Ovary (tissue), 10 donors: ENCODE measurements at regions of chr4 and their contacts with region 1.

Region 1: DNA sequence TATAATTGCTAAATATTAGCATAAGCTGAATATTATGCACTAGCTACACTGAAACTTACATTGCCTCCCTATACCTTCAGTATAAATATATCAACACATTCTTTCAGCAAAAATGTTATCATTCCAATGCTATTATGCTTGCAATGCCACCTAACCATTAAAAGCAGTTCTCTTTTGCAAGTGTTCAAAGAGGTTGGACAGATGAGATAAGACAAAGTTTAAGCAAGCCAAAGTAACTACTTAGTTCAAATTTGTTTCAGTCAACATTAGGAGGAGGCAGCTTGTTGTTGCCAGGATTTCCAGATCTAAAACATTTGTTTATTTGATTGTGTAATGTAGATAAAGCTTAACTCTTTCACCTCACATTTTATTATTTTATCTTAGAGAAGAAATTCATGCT is 323.9 kb upstream of the FAM241A start:
- DNase-seq: no peak
- H3K4me3 ChIP-seq: no peak overlapping the region
- H3K27ac ChIP-seq: no peak overlapping the region
- H3K4me1 ChIP-seq: no peaks in the 10 kb centered on the region
- H3K27me3 ChIP-seq: no peaks in the 10 kb centered on the region
- CTCF ChIP-seq: no peak
- EP300 ChIP-seq: no peak
- POLR2A ChIP-seq: no peak

Region 2: DNA sequence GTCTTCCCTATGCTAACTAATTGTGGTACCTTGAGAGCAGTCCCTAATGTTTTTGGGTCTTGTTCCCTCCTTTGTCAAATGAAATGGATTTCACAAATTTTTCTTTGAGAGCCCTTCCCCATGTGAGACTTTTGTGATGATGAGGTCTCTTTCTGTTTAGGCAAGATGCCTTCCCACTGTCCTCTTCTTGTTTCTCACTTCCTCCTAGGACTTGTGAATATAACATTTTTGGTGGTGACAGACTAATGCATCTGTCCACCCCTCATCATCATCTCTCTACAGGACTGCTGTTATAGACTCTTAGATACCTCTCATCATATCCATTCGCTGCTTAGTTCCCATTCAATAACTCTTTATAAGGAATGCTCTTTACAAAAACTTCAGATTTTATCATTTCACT is 1219.5 kb after region 1 on chr4:
- intact Hi-C with region 1: loop called in 1 of 4 experiments (anchors 5 kb)
- DNase-seq: no peak
- H3K4me3 ChIP-seq: no peak overlapping the region
- H3K27ac ChIP-seq: no peak overlapping the region
- H3K4me1 ChIP-seq: no peaks in the 10 kb centered on the region
- H3K27me3 ChIP-seq: no peaks in the 10 kb centered on the region
- CTCF ChIP-seq: no peak
- EP300 ChIP-seq: no peak
- POLR2A ChIP-seq: no peak